Pancreas (tissue), 10 donors: ENCODE measurements at regions of chr11 and their contacts with region 1.

Region 1: GRCh38 chr11:103601225-103601846 is 435.1 kb upstream of the DDI1 start:
- DNase-seq: peak in 3 of 6 donors; percentile 13 to 33 (median 27)
- ATAC-seq: peak in 3 of 4 donors; percentile 86 to 90 (median 88)
- H3K4me3 ChIP-seq: no peak overlapping the region
- H3K27ac ChIP-seq: no peak overlapping the region
- H3K4me1 ChIP-seq: no peaks in the 10 kb centered on the region
- H3K27me3 ChIP-seq: no peaks in the 10 kb centered on the region
- CTCF ChIP-seq: peak; percentile 70 to 80 (median 76)

Region 2: DNA sequence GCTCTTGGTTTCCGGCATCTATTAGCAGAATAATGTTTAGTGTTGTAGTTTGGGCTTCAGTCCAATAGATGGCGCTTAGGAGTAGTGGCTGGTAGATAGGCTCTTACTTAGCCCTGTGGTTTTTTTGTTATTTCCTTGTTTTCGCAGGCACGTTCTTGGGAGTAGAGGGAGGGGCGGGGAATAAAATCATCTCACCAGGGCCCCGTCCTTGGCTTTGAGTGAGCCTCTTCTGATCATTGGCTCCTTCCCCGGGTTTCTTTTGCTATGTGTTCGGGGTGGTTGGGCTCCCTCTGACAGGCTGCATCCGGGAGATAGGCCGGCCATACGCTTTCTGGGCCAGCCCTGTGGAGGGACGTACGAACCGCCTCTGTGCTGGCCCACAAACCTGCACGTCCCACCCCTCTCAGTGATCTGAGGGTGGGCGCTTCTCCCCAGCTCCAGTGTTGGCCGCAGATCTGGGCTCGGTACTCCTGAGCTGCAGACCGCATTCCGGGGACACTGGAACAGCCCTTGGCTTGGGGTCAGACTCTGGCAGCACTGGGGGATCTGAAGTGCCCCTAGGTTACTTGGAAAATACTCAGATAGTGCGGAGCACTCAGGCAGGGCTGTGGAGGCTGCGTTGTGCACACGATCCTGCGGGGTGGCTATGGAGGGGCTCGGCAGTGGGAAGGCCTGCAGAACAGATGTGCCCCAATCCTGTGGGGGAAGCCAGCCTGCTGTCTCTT is 275.1 kb before region 1 on chr11:
- intact Hi-C with region 1: loop called in 1 of 3 experiments (anchors 10 kb)
- DNase-seq: peak in 4 of 6 donors; percentile 22 to 42 (median 34)
- ATAC-seq: peak; percentile 94 to 98 (median 96)
- H3K4me3 ChIP-seq: no peak overlapping the region
- H3K27ac ChIP-seq: no peak overlapping the region
- H3K4me1 ChIP-seq: no peaks in the 10 kb centered on the region
- H3K27me3 ChIP-seq: no peaks in the 10 kb centered on the region
- CTCF ChIP-seq: peak in 3 of 4 donors; percentile 30 to 52 (median 46)